ENCODE measurements at regions of chr14 and their contacts with region 1.

Region 1: GRCh38 chr14:20530771-20531571 is 25.6 kb downstream of the RNASE10 start:
- DNase-seq: peak; percentile 38 to 63 (median 47)
- ATAC-seq: peak; percentile 86
- H3K4me3 ChIP-seq: no peak overlapping the region
- H3K4me3 Mint-ChIP-seq: peak overlapping the region in 6 of 10 donors; percentile 26 to 66 (median 45)
- H3K27ac ChIP-seq: no peak overlapping the region
- H3K27ac Mint-ChIP-seq: peak overlapping the region in 1 of 9 donors; percentile 53
- H3K4me1 ChIP-seq: no peaks in the 10 kb centered on the region
- H3K4me1 Mint-ChIP-seq: peaks cover 2 to 19% (median 12%) of the 10 kb centered on the region in 7 donors
- H3K27me3 ChIP-seq: no peaks in the 10 kb centered on the region
- H3K27me3 Mint-ChIP-seq: peaks cover 0 to 52% (median 8%) of the 10 kb centered on the region in 5 donors

Region 2: DNA sequence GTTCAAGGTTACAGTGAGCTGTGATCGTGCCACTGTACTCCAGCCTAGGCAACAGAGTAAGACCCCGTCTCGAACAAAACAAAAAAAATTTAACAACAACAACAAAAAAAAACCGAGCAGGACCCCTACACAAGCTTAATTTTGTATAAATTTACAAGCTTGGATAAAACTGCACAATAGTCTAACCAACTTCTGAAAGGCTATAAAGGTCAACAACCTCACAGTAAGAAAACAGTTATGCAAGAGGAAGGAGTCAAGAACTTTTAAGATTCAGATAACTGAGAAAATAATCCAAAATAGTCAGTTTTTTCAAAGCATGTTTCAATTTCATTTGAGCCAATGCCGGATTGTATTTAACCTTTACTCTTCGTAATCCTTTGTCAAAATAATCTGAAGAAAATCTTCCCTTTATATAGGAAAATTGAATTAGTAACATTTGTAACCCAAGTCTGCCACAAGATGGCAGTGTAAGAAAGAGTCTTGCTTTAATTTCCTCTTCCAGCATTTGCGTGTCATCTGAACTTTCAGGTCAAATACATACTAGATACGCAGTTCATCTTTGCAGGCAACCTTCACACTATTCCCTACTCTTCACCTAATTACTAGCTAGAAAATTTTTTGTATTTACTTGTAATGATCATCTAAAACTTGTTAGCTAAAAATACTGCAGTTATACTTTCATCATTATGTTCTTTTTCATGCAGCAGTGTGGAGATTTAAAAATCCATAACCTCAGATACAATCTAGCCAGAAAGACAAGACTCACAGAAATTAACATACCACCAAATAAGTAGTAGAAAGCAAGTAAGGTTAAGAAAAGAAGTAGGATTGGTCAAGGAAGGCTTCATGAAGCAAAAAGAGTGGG is 203.7 kb before region 1 on chr14:
- CTCF ChIA-PET with region 1: interaction called, 5 read pairs
- POLR2A ChIA-PET with region 1: no interaction called
- intact Hi-C with region 1: loop called in 1 of 2 experiments (anchors 2 kb)
- DNase-seq: peak in 7 of 9 donors; percentile 44 to 74 (median 66)
- ATAC-seq: peak; percentile 81
- H3K4me3 ChIP-seq: no peak overlapping the region
- H3K4me3 Mint-ChIP-seq: peak overlapping the region in 5 of 10 donors; percentile 2 to 52 (median 26)
- H3K27ac ChIP-seq: no peak overlapping the region
- H3K27ac Mint-ChIP-seq: peak overlapping the region; percentile 35 to 93 (median 66)
- H3K4me1 ChIP-seq: peaks cover 0 to 4% of the 10 kb centered on the region in 2 donors
- H3K4me1 Mint-ChIP-seq: peaks cover 9 to 42% (median 27%) of the 10 kb centered on the region in 7 donors
- H3K27me3 ChIP-seq: no peaks in the 10 kb centered on the region
- H3K27me3 Mint-ChIP-seq: no peaks in the 10 kb centered on the region

Region 3: GRCh38 chr14:20469242-20469889 is 61.6 kb before region 1 on chr14 and contains the start of gene PNP:
- CTCF ChIA-PET with region 1: interaction called, 3 read pairs
- POLR2A ChIA-PET with region 1: interaction called, 3 read pairs
- intact Hi-C with region 1: loop called in 1 of 2 experiments (anchors 1 kb)
- DNase-seq: peak; percentile 74 to 88 (median 84)
- ATAC-seq: peak; percentile 94
- H3K4me3 ChIP-seq: peak within 1 kb of the TSS; percentile 87
- H3K4me3 Mint-ChIP-seq: peak within 1 kb of the TSS; percentile 95 to 100 (median 99)
- H3K27ac ChIP-seq: peak within 1 kb of the TSS; percentile 87
- H3K27ac Mint-ChIP-seq: peak within 1 kb of the TSS; percentile 89 to 98 (median 97)
- H3K4me1 ChIP-seq: peaks cover 13 to 32% of the 10 kb centered on the region in 2 donors
- H3K4me1 Mint-ChIP-seq: peaks cover 40 to 49% (median 43%) of the 10 kb centered on the region in 7 donors
- H3K27me3 ChIP-seq: no peaks in the 10 kb centered on the region
- H3K27me3 Mint-ChIP-seq: peaks cover 0 to 6% (median 0%) of the 10 kb centered on the region in 5 donors
- total RNA-seq, gene PNP: 58.9 to 179 (median 83.0) TPM

Region 4: GRCh38 chr14:20489093-20489994 is 41.6 kb before region 1 on chr14:
- CTCF ChIA-PET with region 1: no interaction called
- POLR2A ChIA-PET with region 1: no interaction called
- intact Hi-C with region 1: loop called in 1 of 2 experiments (anchors 2 kb)
- DNase-seq: peak in 5 of 9 donors; percentile 14 to 40 (median 35)
- ATAC-seq: peak; percentile 70
- H3K4me3 ChIP-seq: peak overlapping the region; percentile 35
- H3K4me3 Mint-ChIP-seq: peak overlapping the region; percentile 67 to 93 (median 76)
- H3K27ac ChIP-seq: peak overlapping the region; percentile 46
- H3K27ac Mint-ChIP-seq: peak overlapping the region; percentile 65 to 95 (median 86)
- H3K4me1 ChIP-seq: peaks cover 37 to 51% of the 10 kb centered on the region in 2 donors
- H3K4me1 Mint-ChIP-seq: peaks cover 47 to 89% (median 79%) of the 10 kb centered on the region in 7 donors
- H3K27me3 ChIP-seq: no peaks in the 10 kb centered on the region
- H3K27me3 Mint-ChIP-seq: no peaks in the 10 kb centered on the region

Region 5: GRCh38 chr14:20690848-20691523 is 160.0 kb after region 1 on chr14:
- CTCF ChIA-PET with region 1: no interaction called
- POLR2A ChIA-PET with region 1: no interaction called
- intact Hi-C with region 1: loop called (anchors 1 kb)
- DNase-seq: peak in 7 of 9 donors; percentile 48 to 69 (median 63)
- ATAC-seq: peak; percentile 97
- H3K4me3 ChIP-seq: no peak overlapping the region
- H3K4me3 Mint-ChIP-seq: no peak overlapping the region
- H3K27ac ChIP-seq: no peak overlapping the region
- H3K27ac Mint-ChIP-seq: peak overlapping the region in 1 of 9 donors; percentile 32
- H3K4me1 ChIP-seq: no peaks in the 10 kb centered on the region
- H3K4me1 Mint-ChIP-seq: peaks cover 0 to 16% (median 6%) of the 10 kb centered on the region in 7 donors
- H3K27me3 ChIP-seq: no peaks in the 10 kb centered on the region
- H3K27me3 Mint-ChIP-seq: no peaks in the 10 kb centered on the region

Measured in naive thymus-derived CD4-positive, alpha-beta T cell (primary cell).